WTC11 (cell line): ENCODE measurements at regions of chr4 and their contacts with region 1.

Region 1: DNA sequence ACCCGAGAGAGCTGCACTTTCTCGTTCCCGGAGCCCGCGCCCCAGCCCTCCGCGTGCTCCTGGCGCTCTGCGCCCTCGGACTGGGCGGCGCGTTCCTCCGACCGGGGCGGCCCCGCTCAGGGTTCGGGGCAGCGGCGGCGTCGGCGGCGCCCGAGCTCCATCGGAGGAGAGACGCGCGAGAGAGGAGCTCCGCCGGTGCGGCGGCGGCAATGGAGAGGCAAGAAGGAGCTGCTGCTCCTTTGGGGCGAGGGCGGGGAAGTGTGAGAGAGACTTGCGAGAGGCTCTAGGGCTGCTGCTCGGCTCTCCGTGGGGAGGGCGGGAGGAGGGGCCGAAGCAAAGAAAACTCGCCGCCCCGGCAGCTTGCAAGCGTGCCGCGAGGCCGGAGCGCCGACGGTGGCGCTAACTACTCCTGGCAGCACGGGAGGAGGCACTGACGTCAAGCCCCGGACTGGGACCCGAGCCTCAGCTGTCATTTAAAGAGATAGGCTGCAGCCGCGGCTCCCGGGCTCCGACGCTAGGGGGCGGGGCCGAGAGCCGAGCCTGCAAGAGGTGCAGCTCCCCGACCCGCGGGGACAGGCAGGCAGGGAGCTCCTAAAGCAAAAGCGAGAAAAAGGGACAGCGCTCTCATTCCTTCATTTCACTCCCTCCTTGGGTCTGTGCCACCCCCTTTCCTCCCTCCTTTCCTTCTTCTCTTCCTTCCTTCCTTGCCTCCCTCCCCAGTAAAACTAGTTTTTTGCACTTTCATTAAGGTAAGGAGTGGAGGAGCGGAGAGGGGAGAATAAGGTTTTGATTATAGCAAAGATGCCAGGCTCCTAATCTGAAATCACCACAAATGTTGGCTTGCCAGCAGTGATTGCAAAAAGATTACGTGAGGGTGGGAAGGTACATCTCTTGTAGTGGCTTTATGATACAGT is at the start of gene KCTD8:
- DNase-seq: peak; percentile 96
- ATAC-seq: peak; percentile 83
- H3K4me3 Mint-ChIP-seq: peak within 1 kb of the TSS; percentile 83
- H3K27ac Mint-ChIP-seq: peak within 1 kb of the TSS; percentile 61; the same call in 1 of the 2 replicates
- H3K4me1 Mint-ChIP-seq: peaks cover 24% of the 10 kb centered on the region
- H3K27me3 Mint-ChIP-seq: peaks cover 23% of the 10 kb centered on the region
- CTCF ChIP-seq: peak; percentile 71
- total RNA-seq, gene KCTD8: 3.5 to 3.8 TPM (median 3.6 TPM) in 3 replicates

Region 2: GRCh38 chr4:44425614-44426208 is 23.1 kb before region 1 on chr4:
- CTCF ChIA-PET with region 1: interaction called, 17 read pairs
- POLR2A ChIA-PET with region 1: interaction called, 5 read pairs
- DNase-seq: peak; percentile 49
- ATAC-seq: peak; percentile 97
- H3K4me3 Mint-ChIP-seq: no peak overlapping the region
- H3K27ac Mint-ChIP-seq: no peak overlapping the region
- H3K4me1 Mint-ChIP-seq: peaks cover 23% of the 10 kb centered on the region
- H3K27me3 Mint-ChIP-seq: no peaks in the 10 kb centered on the region
- CTCF ChIP-seq: no peak; the same call in 1 of the 2 replicates

Region 3: GRCh38 chr4:44493924-44494323 is 45.1 kb after region 1 on chr4:
- CTCF ChIA-PET with region 1: interaction called, 27 read pairs
- POLR2A ChIA-PET with region 1: interaction called, 7 read pairs
- DNase-seq: no peak
- ATAC-seq: peak; percentile 79
- H3K4me3 Mint-ChIP-seq: no peak overlapping the region
- H3K27ac Mint-ChIP-seq: no peak overlapping the region
- H3K4me1 Mint-ChIP-seq: peaks cover 4% of the 10 kb centered on the region
- H3K27me3 Mint-ChIP-seq: no peaks in the 10 kb centered on the region
- CTCF ChIP-seq: no peak; the same call in 1 of the 2 replicates

Region 4: DNA sequence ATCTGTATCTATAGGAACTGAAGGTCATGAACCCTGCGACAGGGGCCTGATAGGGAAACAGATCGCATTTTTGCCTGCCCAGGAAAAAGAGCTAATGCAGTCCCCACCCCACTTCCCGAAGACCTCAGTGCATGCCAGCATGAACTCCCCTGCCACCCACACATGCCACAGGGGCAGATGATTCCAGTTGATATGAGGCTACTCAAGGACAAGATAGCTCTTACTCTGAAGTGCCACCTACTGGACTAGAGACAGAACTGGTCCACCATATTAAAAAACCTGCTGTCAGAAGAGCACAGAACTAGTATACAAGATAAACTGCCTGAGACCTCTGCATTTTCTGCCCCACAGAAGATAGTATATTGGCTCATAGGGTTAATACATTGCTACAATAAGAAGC is 134.6 kb after region 1 on chr4:
- CTCF ChIA-PET with region 1: interaction called, 21 read pairs
- POLR2A ChIA-PET with region 1: no interaction called
- DNase-seq: peak; percentile 10
- ATAC-seq: peak; percentile 86
- H3K4me3 Mint-ChIP-seq: no peak overlapping the region
- H3K27ac Mint-ChIP-seq: no peak overlapping the region
- H3K4me1 Mint-ChIP-seq: peaks cover 7% of the 10 kb centered on the region
- H3K27me3 Mint-ChIP-seq: no peaks in the 10 kb centered on the region
- CTCF ChIP-seq: no peak

Region 5: DNA sequence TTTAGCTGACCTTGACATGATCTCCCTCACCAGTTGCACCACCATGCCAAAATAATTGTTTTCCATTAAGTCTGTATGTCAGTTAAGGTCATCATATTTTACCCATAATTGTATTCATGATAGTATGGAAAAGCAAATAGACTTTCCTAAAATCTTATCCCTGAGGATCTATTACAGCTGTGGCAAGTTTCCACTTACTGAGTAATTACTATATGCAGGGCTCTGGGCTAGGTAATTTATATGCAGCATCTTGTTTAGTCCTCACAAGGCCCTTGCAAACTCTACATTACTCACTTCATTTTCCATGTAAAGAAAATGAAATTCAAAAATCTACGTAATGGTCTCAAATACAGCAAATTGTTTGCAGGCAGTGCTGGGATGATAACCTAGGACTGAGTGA is 167.8 kb after region 1 on chr4:
- CTCF ChIA-PET with region 1: no interaction called
- POLR2A ChIA-PET with region 1: no interaction called
- DNase-seq: no peak
- ATAC-seq: no peak
- H3K4me3 Mint-ChIP-seq: no peak overlapping the region
- H3K27ac Mint-ChIP-seq: no peak overlapping the region
- H3K4me1 Mint-ChIP-seq: no peaks in the 10 kb centered on the region
- H3K27me3 Mint-ChIP-seq: no peaks in the 10 kb centered on the region
- CTCF ChIP-seq: no peak

Region 6: GRCh38 chr4:44629280-44629866 is 180.6 kb after region 1 on chr4:
- CTCF ChIA-PET with region 1: interaction called, 13 read pairs
- POLR2A ChIA-PET with region 1: no interaction called
- DNase-seq: peak; percentile 27
- ATAC-seq: peak; percentile 84
- H3K4me3 Mint-ChIP-seq: no peak overlapping the region
- H3K27ac Mint-ChIP-seq: no peak overlapping the region
- H3K4me1 Mint-ChIP-seq: no peaks in the 10 kb centered on the region
- H3K27me3 Mint-ChIP-seq: no peaks in the 10 kb centered on the region
- CTCF ChIP-seq: peak; percentile 24; the same call in 1 of the 2 replicates

Region 7: DNA sequence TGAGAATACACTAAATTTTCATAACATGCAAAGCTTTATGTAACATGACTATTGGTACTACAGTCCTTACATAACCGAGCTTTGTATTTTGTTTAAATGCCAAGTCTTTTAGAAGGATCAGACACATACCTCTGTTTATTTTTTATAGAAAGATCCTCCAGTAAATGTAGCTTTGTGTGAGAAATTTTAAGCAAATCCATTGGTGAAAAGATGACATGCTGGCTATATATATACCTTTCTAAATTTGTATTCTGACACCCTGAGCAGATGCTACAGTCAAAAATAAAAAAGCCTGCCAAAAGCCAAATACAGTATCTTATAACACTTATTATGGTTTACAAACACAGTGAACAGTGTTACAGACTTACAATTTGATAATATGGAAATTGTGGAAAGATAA is 202.6 kb after region 1 on chr4 and contains the start of gene YIPF7:
- CTCF ChIA-PET with region 1: no interaction called
- POLR2A ChIA-PET with region 1: no interaction called
- DNase-seq: no peak
- ATAC-seq: no peak
- H3K4me3 Mint-ChIP-seq: no peak within 1 kb of the TSS
- H3K27ac Mint-ChIP-seq: no peak within 1 kb of the TSS
- H3K4me1 Mint-ChIP-seq: no peaks in the 10 kb centered on the region
- H3K27me3 Mint-ChIP-seq: no peaks in the 10 kb centered on the region
- CTCF ChIP-seq: no peak
- total RNA-seq, gene YIPF7: not detected in 3 replicates

Region 8: GRCh38 chr4:44678094-44679041 is 229.6 kb after region 1 on chr4 and contains the start of gene GUF1:
- CTCF ChIA-PET with region 1: interaction called, 12 read pairs
- POLR2A ChIA-PET with region 1: interaction called, 3 read pairs
- DNase-seq: peak; percentile 78
- ATAC-seq: peak; percentile 93
- H3K4me3 Mint-ChIP-seq: peak within 1 kb of the TSS; percentile 87
- H3K27ac Mint-ChIP-seq: peak within 1 kb of the TSS; percentile 91
- H3K4me1 Mint-ChIP-seq: peaks cover 13% of the 10 kb centered on the region
- H3K27me3 Mint-ChIP-seq: peaks cover 3% of the 10 kb centered on the region; the same call in 1 of the 2 replicates
- CTCF ChIP-seq: no peak
- total RNA-seq, gene GUF1: 37.6 to 38.8 TPM (median 37.8 TPM) in 3 replicates